Vagina (tissue), 2 donors: ENCODE measurements at regions of chr16 and their contacts with region 1.

Region 1: DNA sequence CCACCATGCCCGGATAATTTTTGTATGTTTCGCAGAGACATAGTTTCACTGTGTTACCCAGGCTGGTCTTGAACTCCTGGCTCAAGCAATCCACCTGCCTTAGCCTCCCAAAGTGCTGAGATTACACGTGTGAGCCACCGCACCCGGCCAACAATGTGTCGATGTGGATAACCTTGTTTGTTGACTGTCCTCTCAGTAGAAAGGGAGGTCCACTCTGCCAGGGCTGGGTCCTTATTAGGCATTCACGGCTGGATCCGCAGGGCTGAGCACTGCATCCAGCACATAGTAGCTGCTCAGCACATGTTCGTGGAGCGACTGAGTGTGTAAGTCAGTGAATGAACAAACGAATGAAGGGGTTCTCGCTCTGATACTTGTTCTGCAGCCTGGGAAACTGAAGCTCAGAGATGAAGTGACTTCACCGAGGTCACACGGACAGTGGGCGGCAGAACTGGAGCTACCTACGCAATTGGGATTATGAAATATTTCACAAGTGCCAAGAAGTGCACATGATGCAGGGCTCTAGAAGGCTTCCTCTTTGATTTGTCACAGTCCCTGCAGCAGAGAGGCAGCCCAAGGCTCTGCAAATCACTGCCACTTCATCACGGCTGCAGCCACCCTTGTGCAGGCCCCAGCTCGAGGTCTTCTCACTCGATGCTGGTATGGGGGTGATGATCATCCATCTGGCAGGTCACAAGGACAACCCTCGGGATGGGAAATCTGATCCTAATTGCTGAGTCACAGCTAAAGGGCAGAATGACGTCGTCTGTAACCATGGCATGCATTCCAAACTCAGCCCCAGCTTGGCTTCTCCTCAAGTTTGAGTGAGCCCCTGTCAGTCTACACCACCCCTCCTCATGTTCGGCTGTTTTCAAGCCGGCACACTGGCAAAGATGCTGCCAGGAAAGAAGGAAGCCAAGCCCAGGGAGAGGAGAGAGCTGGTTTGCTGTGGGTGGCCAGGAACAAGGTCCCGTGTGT is 28.0 kb upstream of the SNN start:
- DNase-seq: peak in 1 of 2 donors; percentile 99
- H3K4me3 ChIP-seq: peak overlapping the region in 1 of 2 donors; percentile 22
- H3K27ac ChIP-seq: peak overlapping the region; percentile 98
- H3K4me1 ChIP-seq: peaks cover 21% of the 10 kb centered on the region
- H3K27me3 ChIP-seq: no peaks in the 10 kb centered on the region
- CTCF ChIP-seq: no peak
- POLR2A ChIP-seq: peak in 1 of 2 donors; percentile 71

Region 2: GRCh38 chr16:11535471-11535870 is 104.7 kb before region 1 on chr16:
- intact Hi-C with region 1: loop called (anchors 5 kb)
- DNase-seq: no peak
- H3K4me3 ChIP-seq: no peak overlapping the region
- H3K27ac ChIP-seq: no peak overlapping the region
- H3K4me1 ChIP-seq: peaks cover 8% of the 10 kb centered on the region
- H3K27me3 ChIP-seq: no peaks in the 10 kb centered on the region
- CTCF ChIP-seq: no peak
- POLR2A ChIP-seq: no peak